Head of caudate nucleus (tissue), 42 donors: ENCODE measurements at regions of chr1 and their contacts with region 1.

Region 1: DNA sequence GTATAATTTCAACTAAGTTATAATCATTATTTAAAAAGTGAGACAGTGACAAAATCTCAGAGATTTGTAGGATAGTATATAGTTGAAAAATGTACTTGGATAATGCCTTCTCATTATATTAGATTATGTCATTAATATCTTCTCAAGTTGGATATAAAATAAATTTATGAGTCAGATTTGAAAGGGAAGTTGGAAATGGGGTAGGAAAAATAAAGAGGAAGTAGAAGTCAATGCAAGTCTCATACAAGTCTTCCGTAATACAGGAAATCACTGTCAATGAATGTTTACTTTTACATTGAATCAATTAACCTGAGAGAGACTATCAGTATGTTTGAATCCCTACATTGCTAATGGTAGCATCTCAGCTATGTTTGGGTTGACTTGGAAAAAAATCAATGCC is 16.2 kb upstream of the RNPC3 start:
- DNase-seq: no peak

Region 2: DNA sequence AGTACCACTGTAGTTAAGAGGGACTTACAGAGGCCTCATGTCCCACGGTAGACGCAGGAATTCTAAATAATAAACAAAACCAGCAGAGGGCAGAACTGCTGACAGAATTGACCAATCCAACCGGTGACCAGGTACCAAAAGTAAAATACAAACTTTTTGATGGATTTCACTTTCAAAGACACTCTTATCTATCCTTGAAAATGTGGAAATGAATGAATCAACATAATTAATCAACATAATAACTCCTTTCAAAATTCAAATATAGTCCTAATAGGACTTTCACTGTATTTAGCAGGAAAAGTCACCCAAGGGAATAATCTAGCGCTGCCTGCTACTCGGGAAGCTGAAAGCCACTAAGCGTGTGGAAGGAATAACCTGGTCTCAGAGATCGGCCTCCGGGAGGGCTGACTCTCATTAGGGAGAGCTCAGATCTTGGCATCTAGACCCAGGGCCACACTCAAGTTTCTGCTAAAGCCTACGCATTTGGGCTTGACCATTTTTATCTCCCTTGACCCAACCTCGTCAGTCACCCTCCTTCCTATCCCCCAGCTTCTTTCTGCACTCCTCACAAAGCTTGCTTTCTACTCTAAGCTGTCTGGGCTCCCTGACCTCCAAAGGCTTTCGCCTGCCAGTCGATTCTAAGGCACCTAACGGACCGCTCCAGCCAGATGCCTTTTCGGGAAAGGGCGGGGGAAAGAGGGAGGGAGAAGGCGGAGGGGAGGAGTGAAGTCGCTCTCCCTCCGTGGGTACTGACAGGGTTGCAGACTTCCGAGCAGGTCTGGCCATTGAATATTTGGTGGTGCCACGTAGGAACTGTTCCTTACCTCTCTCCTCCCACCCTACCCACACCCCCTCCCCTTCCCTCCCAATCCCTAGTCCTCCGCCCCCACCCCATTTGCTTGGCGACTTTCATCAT is 402.6 kb before region 1 on chr1:
- intact Hi-C with region 1: loop called (anchors 10 kb)
- DNase-seq: peak in 37 of 42 donors; percentile 10 to 69 (median 34)

Region 3: GRCh38 chr1:103547840-103548239 is 38.6 kb after region 1 on chr1:
- intact Hi-C with region 1: no loop called
- DNase-seq: peak in 1 of 42 donors; percentile 35